SK-N-SH (cell line): ENCODE measurements at regions of chr6 and their contacts with region 1.

Region 1: GRCh38 chr6:69796642-69797390 is at the start of gene LMBRD1:
- DNase-seq: peak; percentile 92
- H3K4me3 ChIP-seq: peak within 1 kb of the TSS; percentile 79 to 83
- H3K27ac ChIP-seq: peak within 1 kb of the TSS; percentile 38 to 77
- H3K4me1 ChIP-seq: peaks cover 4 to 5% of the 10 kb centered on the region in 2 experiments; a peak in 3 of 4 replicates
- H3K27me3 ChIP-seq: no peaks in the 10 kb centered on the region
- CTCF ChIP-seq: peak; percentile 83
- EP300 ChIP-seq: no peak
- RAD21 ChIP-seq: no peak
- polyA plus RNA-seq, gene LMBRD1: 6.5 and 7.8 TPM in 2 replicates

Region 2: GRCh38 chr6:69813508-69813907 is 16.7 kb after region 1 on chr6:
- CTCF ChIA-PET with region 1: interaction called, 10 read pairs
- POLR2A ChIA-PET with region 1: no interaction called
- DNase-seq: no peak
- H3K4me3 ChIP-seq: no peak overlapping the region
- H3K27ac ChIP-seq: no peak overlapping the region
- H3K4me1 ChIP-seq: no peaks in the 10 kb centered on the region; a peak in 1 of 4 replicates
- H3K27me3 ChIP-seq: no peaks in the 10 kb centered on the region
- CTCF ChIP-seq: no peak
- EP300 ChIP-seq: no peak
- RAD21 ChIP-seq: no peak